ENCODE measurements at regions of chr16 and their contacts with region 1.

Region 1: DNA sequence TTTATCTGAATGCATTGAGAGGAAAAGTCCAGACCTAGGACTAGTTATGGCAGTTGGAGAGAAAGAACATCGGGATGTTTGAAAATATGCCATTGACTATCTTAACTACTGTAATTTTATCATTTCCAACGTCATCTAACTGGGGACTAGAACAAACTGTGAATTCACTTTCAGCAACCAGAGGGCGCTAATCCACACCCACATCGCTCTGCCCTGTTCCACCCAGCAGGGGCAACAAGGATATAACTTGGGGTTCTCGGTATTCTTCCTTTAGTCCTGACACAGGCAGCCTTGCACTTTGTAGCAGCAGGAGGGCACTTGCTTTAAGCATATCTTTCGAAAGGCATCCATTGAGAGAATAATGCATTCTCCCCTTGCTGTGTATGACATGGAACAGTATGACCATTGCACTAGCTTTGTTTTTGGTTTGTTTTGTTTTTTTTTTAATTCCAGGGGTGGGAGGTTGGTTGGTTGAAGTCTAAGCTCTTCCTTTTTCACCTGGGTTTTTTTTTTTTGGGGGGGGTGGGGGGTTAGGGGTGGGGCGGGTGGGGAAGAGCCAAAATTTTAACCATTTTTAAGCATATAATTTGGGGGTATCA is 31.5 kb downstream of the SIAH1 start:
- DNase-seq: peak; percentile 79
- H3K4me3 Mint-ChIP-seq: no peak overlapping the region
- H3K27ac Mint-ChIP-seq: peak overlapping the region; percentile 54
- H3K4me1 Mint-ChIP-seq: peaks cover 18% of the 10 kb centered on the region
- H3K27me3 Mint-ChIP-seq: no peaks in the 10 kb centered on the region

Region 2: DNA sequence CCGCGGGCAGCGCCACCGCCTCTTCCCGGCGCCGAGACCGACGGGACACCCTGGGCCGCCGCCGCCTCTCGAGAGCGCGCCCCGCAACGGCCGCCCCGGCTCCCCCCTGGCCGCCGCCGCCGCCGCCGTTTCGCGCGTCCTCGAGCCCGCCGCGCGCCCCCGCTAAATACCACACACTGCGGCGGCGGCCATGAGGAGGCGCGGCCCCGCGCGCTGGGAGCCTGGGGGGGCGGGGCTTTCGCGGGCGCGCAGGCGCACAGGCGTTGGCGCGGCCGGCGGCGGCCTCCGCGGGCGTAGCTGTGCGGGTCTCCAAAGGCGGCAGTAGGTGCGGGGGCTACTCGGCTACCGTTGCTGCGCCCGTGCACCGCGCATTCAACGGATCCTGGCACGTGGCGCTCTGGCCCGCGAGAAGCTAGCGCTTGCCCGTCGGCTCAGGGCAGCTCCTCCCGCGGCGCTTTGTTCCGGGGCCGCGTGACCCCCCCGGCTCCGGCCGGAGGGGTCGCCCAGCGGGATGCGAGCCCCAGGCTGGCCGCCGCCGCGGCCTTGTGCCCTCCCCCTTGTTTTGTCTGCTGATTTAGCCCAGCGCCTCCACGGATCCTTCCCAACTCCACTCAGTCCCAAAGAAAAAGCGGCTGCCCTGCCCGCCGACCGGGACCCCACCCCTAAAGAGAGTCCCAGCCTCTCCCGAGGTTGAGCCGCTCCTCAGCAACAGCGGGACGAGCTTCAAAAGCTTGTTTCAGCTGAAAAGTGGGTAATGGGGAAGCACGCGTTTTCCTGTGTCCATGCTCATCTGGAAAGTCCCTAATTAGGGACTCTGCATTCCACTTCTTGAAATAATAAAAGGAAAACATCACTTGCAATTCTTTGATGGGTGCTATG is 31.8 kb after region 1 on chr16 and contains the start of gene SIAH1:
- CTCF ChIA-PET with region 1: interaction called, 5 read pairs
- intact Hi-C with region 1: loop called (anchors 1 kb)
- DNase-seq: peak; percentile 83
- H3K4me3 Mint-ChIP-seq: peak within 1 kb of the TSS; percentile 89
- H3K27ac Mint-ChIP-seq: peak within 1 kb of the TSS; percentile 90
- H3K4me1 Mint-ChIP-seq: peaks cover 22% of the 10 kb centered on the region
- H3K27me3 Mint-ChIP-seq: no peaks in the 10 kb centered on the region
- total RNA-seq, gene SIAH1: 13.7 to 14.6 TPM

Region 3: DNA sequence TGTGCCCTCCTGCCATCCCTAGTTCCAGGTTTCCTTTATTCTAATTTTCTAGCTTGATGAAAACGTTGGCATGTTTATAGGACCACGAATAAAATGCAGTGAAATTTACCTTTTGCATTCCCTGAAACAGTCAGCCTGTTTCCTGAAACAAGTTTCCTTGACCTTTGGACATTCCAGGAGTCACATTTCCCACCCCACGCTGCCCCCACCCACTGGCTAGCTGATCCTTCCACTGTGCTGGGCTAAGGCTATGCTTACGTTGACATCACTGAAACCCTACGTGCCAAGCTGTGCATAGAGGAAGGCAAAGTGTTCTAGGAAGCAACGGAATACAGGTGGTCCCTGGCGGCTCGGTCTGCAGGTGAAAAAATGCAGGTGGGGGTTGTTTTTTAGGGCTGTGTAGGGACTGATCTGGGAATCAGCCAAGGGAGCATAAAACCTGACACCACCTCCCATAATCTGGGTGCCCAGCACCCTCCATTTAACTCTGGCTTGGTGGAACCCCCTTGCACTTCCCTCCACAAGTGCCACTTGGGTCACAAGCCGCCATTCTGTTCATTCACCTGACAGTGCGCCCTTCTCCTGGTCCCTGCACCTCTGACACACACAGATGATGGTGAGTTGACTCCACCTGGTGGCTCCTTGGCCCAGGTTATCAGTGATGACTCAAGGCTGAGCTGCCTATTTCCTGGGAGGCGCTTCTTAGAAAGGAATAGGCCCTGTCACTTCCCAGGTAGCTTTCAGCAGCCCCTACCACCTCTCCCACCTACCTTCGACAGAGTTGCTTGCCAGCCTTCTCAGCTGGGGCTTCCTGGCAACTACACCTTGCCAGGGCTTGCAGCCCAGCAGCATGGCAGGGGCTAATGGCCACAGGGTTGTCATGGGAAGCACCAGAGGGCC is 172.6 kb after region 1 on chr16:
- CTCF ChIA-PET with region 1: interaction called, 6 read pairs
- intact Hi-C with region 1: loop called (anchors 1 kb)
- DNase-seq: peak; percentile 74
- H3K4me3 Mint-ChIP-seq: no peak overlapping the region
- H3K27ac Mint-ChIP-seq: no peak overlapping the region
- H3K4me1 Mint-ChIP-seq: no peaks in the 10 kb centered on the region
- H3K27me3 Mint-ChIP-seq: no peaks in the 10 kb centered on the region

Region 4: GRCh38 chr16:48542020-48542473 is 188.4 kb after region 1 on chr16:
- CTCF ChIA-PET with region 1: no interaction called
- intact Hi-C with region 1: loop called (anchors 1 kb)
- DNase-seq: peak; percentile 38
- H3K4me3 Mint-ChIP-seq: no peak overlapping the region
- H3K27ac Mint-ChIP-seq: no peak overlapping the region
- H3K4me1 Mint-ChIP-seq: peaks cover 17% of the 10 kb centered on the region
- H3K27me3 Mint-ChIP-seq: no peaks in the 10 kb centered on the region